ENCODE measurements at regions of chr9 and their contacts with region 1.

Region 1: DNA sequence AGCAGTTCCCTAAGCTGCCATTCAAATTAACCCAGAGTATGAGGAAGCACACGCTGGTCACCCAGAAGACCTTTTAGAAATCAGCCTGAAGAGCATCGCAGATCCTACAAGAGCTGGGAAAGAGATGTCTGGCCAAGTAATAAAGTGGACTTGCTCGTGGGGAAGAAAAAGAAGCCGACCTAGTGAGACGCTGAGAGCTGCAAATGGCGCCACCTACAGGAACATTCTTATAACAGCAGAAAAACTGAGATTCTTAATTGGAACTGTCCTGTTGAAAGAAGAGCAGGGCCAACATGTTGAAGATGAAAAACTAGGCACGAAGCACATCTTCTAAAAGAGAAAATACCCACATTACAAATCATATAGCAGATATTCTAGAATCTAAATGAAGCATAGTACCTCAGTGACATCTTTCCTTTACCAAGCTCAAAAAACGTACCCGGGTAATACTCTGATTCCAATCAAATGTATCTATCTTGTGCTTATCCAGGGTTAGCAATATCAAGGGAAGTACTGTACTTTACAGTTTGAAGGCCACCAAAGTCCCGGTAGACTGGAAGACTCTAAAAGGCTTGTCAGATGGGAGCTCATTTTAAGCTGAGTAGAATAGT is 3.9 kb upstream of the GNAQ start:
- DNase-seq: peak; percentile 88
- H3K4me3 ChIP-seq: no peak overlapping the region
- H3K27ac ChIP-seq: no peak overlapping the region
- H3K4me1 ChIP-seq: peaks cover 38% of the 10 kb centered on the region
- H3K27me3 ChIP-seq: no peaks in the 10 kb centered on the region
- CTCF ChIP-seq: peak; percentile 69 to 74
- POLR2A ChIP-seq: no peak

Region 2: GRCh38 chr9:77433675-77434445 is 601.6 kb before region 1 on chr9:
- CTCF ChIA-PET with region 1: interaction called, 13 read pairs
- POLR2A ChIA-PET with region 1: no interaction called
- dilution Hi-C with region 1: no loop called
- intact Hi-C with region 1: no loop called
- DNase-seq: peak; percentile 68
- H3K4me3 ChIP-seq: no peak overlapping the region
- H3K27ac ChIP-seq: no peak overlapping the region
- H3K4me1 ChIP-seq: peaks cover 16% of the 10 kb centered on the region
- H3K27me3 ChIP-seq: no peaks in the 10 kb centered on the region
- CTCF ChIP-seq: peak; percentile 96
- POLR2A ChIP-seq: no peak

Region 3: DNA sequence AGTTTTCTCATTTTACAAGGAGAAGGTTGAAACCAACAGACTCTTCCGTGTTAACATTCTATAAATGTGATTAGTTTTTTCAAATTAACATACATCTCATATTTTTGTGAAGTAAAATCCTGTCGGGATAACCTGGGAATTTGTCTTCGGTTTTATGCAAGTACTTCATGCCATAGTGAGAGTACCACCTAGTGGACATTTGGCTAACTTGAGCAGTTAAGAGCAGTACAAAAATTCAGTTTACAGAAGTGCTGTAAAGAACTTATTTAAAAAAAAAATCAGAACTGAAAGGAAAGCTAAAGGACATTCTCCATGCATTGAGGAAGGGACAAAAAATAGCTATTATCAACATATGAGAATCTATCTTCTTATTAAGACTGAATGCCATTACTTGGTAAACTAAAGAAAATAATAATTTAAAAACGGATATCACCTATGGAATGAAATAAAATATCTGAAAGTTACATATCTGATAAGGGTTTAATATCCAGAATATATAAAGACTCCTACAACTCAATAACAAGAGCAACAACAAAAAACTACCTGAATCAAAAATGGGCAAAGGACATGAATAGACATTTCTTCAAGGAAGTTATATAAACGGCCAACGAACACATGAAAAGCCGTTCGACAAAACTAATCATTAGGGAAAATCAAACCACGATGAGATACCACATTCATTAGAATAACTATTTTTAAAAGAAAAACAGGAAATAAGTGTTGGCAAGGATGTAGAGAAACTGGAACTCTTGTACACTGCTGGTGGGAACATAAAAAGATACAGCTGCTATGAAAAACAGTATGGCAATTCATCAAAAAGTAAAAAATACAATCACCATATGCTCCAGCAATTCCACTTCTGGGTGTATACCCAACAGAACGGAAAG is 270.4 kb before region 1 on chr9:
- CTCF ChIA-PET with region 1: interaction called, 3 read pairs
- POLR2A ChIA-PET with region 1: no interaction called
- dilution Hi-C with region 1: no loop called
- intact Hi-C with region 1: loop called (anchors 5 kb)
- DNase-seq: peak; percentile 58
- H3K4me3 ChIP-seq: no peak overlapping the region
- H3K27ac ChIP-seq: peak overlapping the region; percentile 11
- H3K4me1 ChIP-seq: peaks cover 12% of the 10 kb centered on the region
- H3K27me3 ChIP-seq: no peaks in the 10 kb centered on the region
- CTCF ChIP-seq: peak; percentile 35 to 46
- POLR2A ChIP-seq: no peak

Region 4: DNA sequence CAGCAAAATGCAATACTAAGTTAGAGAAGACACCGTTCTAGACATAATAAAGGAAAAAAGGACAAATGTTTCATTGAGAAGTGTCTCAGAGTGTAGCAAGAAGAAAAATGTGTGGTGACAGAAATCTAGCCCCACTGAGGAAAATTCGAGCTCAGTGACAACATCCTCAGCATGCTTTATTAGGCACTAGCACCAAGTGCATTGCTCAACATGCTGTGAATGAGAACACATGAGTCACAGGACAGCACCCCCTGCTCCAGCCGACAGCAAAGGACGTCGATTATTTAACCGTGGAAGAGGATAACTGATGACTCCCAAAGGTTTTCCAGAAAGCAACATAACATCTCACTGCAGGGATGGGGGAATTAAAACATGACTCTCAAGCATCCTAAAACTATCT is 186.6 kb before region 1 on chr9:
- CTCF ChIA-PET with region 1: interaction called, 7 read pairs
- POLR2A ChIA-PET with region 1: no interaction called
- dilution Hi-C with region 1: no loop called
- intact Hi-C with region 1: loop called (anchors 2 kb)
- DNase-seq: peak; percentile 80
- H3K4me3 ChIP-seq: no peak overlapping the region
- H3K27ac ChIP-seq: peak overlapping the region; percentile 75
- H3K4me1 ChIP-seq: peaks cover 85% of the 10 kb centered on the region
- H3K27me3 ChIP-seq: no peaks in the 10 kb centered on the region
- CTCF ChIP-seq: no peak
- POLR2A ChIP-seq: no peak

Region 5: GRCh38 chr9:77960356-77961153 is 74.9 kb before region 1 on chr9:
- CTCF ChIA-PET with region 1: interaction called, 5 read pairs
- POLR2A ChIA-PET with region 1: no interaction called
- dilution Hi-C with region 1: no loop called
- intact Hi-C with region 1: loop called (anchors 5 kb)
- DNase-seq: no peak
- H3K4me3 ChIP-seq: no peak overlapping the region
- H3K27ac ChIP-seq: no peak overlapping the region
- H3K4me1 ChIP-seq: peaks cover 38% of the 10 kb centered on the region
- H3K27me3 ChIP-seq: no peaks in the 10 kb centered on the region
- CTCF ChIP-seq: no peak
- POLR2A ChIP-seq: no peak

Region 6: GRCh38 chr9:78074385-78075291 is 39.1 kb after region 1 on chr9:
- CTCF ChIA-PET with region 1: no interaction called
- POLR2A ChIA-PET with region 1: no interaction called
- dilution Hi-C with region 1: no loop called
- intact Hi-C with region 1: no loop called
- DNase-seq: no peak
- H3K4me3 ChIP-seq: no peak overlapping the region
- H3K27ac ChIP-seq: no peak overlapping the region
- H3K4me1 ChIP-seq: no peaks in the 10 kb centered on the region
- H3K27me3 ChIP-seq: peaks cover 4 to 5% of the 10 kb centered on the region in 2 experiments
- CTCF ChIP-seq: no peak
- POLR2A ChIP-seq: no peak

Region 7: GRCh38 chr9:78121488-78121887 is 86.0 kb after region 1 on chr9:
- CTCF ChIA-PET with region 1: interaction called, 9 read pairs
- POLR2A ChIA-PET with region 1: no interaction called
- dilution Hi-C with region 1: no loop called
- intact Hi-C with region 1: loop called (anchors 2 kb)
- DNase-seq: peak; percentile 76
- H3K4me3 ChIP-seq: no peak overlapping the region
- H3K27ac ChIP-seq: no peak overlapping the region
- H3K4me1 ChIP-seq: no peaks in the 10 kb centered on the region
- H3K27me3 ChIP-seq: no peaks in the 10 kb centered on the region
- CTCF ChIP-seq: peak; percentile 64 to 65
- POLR2A ChIP-seq: no peak

Measured in endothelial cell of umbilical vein (primary cell).